Activated CD4-positive, alpha-beta T cell treated with anti-CD3 and anti-CD28 coated beads, Interleukin-2, amount 10 ng/mL, durations not matched to agents 24 days and 14 days (primary cell): ENCODE measurements at regions of chr1 and their contacts with region 1.

Region 1: GRCh38 chr1:59020151-59020997 is 236.5 kb upstream of the JUN start:
- DNase-seq: peak; percentile 87
- H3K4me3 Mint-ChIP-seq: peak overlapping the region; percentile 82
- H3K27ac Mint-ChIP-seq: peak overlapping the region; percentile 95
- H3K4me1 Mint-ChIP-seq: peaks cover 51% of the 10 kb centered on the region
- H3K27me3 Mint-ChIP-seq: no peaks in the 10 kb centered on the region

Region 2: GRCh38 chr1:58857680-58858673 is 162.4 kb before region 1 on chr1:
- intact Hi-C with region 1: loop called (anchors 5 kb)
- DNase-seq: peak; percentile 81
- H3K4me3 Mint-ChIP-seq: peak overlapping the region; percentile 64
- H3K27ac Mint-ChIP-seq: peak overlapping the region; percentile 92
- H3K4me1 Mint-ChIP-seq: peaks cover 49% of the 10 kb centered on the region
- H3K27me3 Mint-ChIP-seq: peaks cover 2% of the 10 kb centered on the region

Region 3: GRCh38 chr1:58968360-58968952 is 51.9 kb before region 1 on chr1:
- intact Hi-C with region 1: loop called (anchors 2 kb)
- DNase-seq: peak; percentile 85
- H3K4me3 Mint-ChIP-seq: peak overlapping the region; percentile 61
- H3K27ac Mint-ChIP-seq: peak overlapping the region; percentile 98
- H3K4me1 Mint-ChIP-seq: peaks cover 32% of the 10 kb centered on the region
- H3K27me3 Mint-ChIP-seq: no peaks in the 10 kb centered on the region

Region 4: GRCh38 chr1:59107516-59107915 is 87.1 kb after region 1 on chr1:
- intact Hi-C with region 1: no loop called
- DNase-seq: no peak
- H3K4me3 Mint-ChIP-seq: no peak overlapping the region
- H3K27ac Mint-ChIP-seq: no peak overlapping the region
- H3K4me1 Mint-ChIP-seq: no peaks in the 10 kb centered on the region
- H3K27me3 Mint-ChIP-seq: no peaks in the 10 kb centered on the region